ENCODE measurements at regions of chr9 and their contacts with region 1.

Region 1: GRCh38 chr9:124505006-124505900 is 1.9 kb downstream of the NR5A1 start:
- DNase-seq: peak in 1 of 2 experiments; percentile 75
- H3K4me3 ChIP-seq: peak overlapping the region in 3 of 4 experiments; percentile 19 to 58 (median 26); a peak in 6 of 8 replicates
- H3K27ac ChIP-seq: no peak overlapping the region
- H3K4me1 ChIP-seq: peaks cover 0 to 17% (median 12%) of the 10 kb centered on the region in 4 experiments; a peak in 6 of 7 replicates
- H3K27me3 ChIP-seq: peaks cover 39 to 61% (median 55%) of the 10 kb centered on the region in 4 experiments
- CTCF ChIP-seq: peak in 2 of 3 experiments; percentile 38 to 53; a peak in 2 of 4 replicates
- EP300 ChIP-seq: no peak
- POLR2A ChIP-seq: no peak
- RAD21 ChIP-seq: peak; percentile 3 to 32; a peak in 1 of 4 replicates

Region 2: DNA sequence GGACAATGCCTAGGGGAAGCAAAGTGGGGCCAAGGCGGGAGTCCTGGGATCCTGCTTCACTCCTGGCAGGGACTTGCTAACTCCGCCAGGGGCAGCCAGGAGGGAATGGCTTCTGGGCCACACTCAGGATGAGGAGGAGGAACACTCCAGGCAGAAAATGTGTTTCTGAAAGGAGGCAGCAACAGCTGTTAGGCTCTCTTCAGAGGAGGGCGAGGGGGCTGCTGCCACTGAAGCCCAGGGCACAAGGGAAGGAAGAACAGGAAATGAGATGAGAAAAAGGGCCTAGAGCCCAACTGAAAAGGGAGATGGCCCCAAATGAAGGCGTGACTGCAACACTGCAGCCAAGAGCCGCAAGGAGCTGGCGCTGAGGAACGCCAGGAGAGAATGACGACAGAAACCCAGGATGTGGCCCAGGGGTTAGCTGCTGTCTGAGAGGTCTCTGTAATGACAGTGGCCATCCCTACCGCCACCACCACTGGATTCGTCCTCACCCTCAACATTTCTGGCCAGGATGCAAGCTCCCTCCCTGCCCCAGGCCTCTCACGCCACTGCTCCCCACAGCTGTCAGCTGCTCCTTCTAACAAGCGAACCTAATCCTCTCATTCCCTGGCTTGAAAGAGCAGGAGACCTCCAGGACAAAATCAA is 105.8 kb before region 1 on chr9:
- CTCF ChIA-PET with region 1: no interaction called
- POLR2A ChIA-PET with region 1: no interaction called
- DNase-seq: peak in 1 of 2 experiments; percentile 56
- H3K4me3 ChIP-seq: no peak overlapping the region
- H3K27ac ChIP-seq: peak overlapping the region; percentile 57
- H3K4me1 ChIP-seq: peaks cover 3 to 14% (median 12%) of the 10 kb centered on the region in 4 experiments
- H3K27me3 ChIP-seq: no peaks in the 10 kb centered on the region
- CTCF ChIP-seq: peak in 2 of 3 experiments; percentile 12 to 21; a peak in 2 of 4 replicates
- EP300 ChIP-seq: no peak
- POLR2A ChIP-seq: no peak
- RAD21 ChIP-seq: no peak

Region 3: DNA sequence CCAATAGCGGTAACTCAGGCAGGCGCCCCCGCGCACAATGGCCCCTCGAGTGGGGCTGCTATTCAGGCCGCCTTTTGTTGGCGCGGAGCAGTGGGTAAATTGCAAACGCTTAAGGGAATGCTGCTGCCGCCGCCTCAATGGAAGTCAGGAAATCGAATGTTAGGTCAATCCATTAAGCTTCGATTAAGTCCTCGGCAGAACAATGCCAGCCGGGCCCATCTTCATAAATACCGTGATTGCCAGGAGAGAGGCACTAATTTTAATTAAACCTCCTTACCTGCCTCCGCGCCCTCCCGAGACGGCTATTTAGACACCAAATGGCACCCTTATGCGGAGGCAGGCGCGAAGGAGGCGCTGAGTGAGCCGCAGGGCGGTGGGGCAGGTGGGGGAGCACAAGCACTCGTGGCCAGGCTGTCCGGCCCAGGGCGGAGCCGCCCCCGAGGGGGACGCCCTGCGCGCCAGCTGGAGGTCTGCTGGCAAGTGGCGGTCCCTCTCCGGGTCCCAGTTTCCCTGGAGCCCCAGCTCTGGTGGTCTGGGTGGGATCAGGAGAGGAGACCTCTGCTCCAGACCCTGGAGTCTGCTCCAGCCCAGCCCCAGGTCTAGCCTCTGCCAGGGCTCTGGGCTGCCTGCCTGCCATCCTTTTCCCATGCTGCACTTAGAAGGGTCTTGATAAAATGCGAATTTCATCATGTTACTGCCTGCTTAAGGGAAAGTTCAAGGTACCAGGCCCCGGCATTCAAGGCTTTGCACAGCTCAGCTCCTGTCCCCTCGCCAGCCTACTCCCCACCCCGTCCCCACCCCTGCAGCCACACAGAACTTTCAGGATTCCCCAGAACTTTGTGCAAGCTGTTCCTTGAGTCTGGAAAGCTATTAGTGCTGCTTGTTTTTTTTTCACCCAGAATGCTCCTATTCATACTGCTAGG is 17.7 kb before region 1 on chr9:
- CTCF ChIA-PET with region 1: interaction called, 11 read pairs
- POLR2A ChIA-PET with region 1: interaction called, 6 read pairs
- DNase-seq: no peak
- H3K4me3 ChIP-seq: 0 out of 8 replicates have a peak overlapping the region, but pooled peaks of 1 of the 4 experiments have one; percentile 22
- H3K27ac ChIP-seq: no peak overlapping the region
- H3K4me1 ChIP-seq: peaks cover 3 to 26% (median 5%) of the 10 kb centered on the region in 4 experiments; a peak in 6 of 7 replicates
- H3K27me3 ChIP-seq: peaks cover 0 to 9% (median 6%) of the 10 kb centered on the region in 4 experiments; a peak in 5 of 7 replicates
- CTCF ChIP-seq: no peak
- EP300 ChIP-seq: no peak
- POLR2A ChIP-seq: no peak
- RAD21 ChIP-seq: no peak

Region 4: DNA sequence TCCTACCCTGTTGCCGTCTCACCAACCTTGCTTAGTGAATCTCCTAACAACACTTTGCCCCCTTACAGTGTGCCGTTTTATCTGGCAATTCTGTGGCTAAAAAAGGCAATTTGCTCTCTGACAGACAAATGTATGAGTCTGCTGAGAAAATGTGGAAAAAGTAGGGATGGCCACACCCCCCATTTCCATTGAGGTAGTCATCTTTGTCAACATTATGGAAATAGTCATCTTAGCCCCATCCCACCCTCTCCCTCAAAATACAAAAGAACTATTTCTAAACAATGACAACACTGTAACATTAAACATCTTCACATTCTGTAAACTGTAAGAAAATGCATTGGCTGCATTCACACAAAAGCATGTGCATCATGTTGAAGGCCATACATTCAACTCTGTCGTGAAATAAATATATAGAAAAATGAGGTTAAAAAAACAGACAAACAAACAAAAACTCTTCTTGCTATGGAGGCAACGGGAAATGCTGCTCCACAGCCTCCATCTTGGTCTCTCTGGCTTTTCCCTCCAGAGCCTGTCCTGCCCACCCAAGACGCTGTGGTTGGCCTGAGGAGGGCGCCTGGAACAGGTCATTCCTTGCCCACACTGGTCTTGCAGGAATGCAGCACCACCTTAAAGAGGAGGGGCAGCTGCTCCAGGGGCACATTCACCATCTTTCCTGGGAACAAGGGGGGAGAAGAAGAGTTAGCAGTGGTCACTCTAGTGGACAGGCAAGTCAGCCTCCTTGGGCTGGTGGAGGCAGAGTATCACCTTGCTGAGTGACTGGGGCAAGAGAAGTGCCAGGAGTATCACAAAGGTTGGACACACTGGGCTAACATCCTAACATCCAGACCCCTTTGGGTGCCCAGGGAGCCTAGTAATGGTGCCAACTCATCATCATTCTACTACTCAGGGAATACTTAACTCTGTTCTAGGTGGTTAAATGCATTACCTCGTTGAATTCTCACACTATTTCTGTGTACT is 17.2 kb after region 1 on chr9:
- CTCF ChIA-PET with region 1: interaction called, 12 read pairs
- POLR2A ChIA-PET with region 1: interaction called, 4 read pairs
- DNase-seq: peak in 1 of 2 experiments; percentile 69
- H3K4me3 ChIP-seq: no peak overlapping the region
- H3K27ac ChIP-seq: no peak overlapping the region
- H3K4me1 ChIP-seq: no peaks in the 10 kb centered on the region
- H3K27me3 ChIP-seq: no peaks in the 10 kb centered on the region
- CTCF ChIP-seq: peak; percentile 23 to 61 (median 45); a peak in 3 of 4 replicates
- EP300 ChIP-seq: no peak
- POLR2A ChIP-seq: no peak
- RAD21 ChIP-seq: peak; percentile 27 to 52

Region 5: DNA sequence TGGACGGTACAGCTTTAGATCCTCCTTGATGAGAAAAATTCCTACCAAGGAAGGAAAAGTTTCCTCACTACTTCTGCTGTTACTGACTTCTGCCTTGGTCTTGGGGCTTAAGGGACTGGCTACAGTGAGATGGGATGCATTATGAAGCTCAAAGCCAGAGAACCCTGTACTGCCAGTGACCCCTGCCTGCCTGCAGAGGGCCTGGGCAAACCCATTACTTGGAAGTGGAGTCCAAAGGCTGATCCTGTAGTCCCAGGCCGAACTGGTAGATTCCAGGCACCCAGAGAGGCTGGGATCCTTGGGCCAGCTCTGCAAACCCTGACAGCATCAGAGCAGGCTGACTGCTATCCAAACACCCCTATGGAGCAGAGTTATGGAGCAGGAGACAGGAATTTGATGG is 27.6 kb after region 1 on chr9:
- CTCF ChIA-PET with region 1: interaction called, 234 read pairs
- POLR2A ChIA-PET with region 1: no interaction called
- DNase-seq: no peak
- H3K4me3 ChIP-seq: no peak overlapping the region
- H3K27ac ChIP-seq: no peak overlapping the region
- H3K4me1 ChIP-seq: no peaks in the 10 kb centered on the region
- H3K27me3 ChIP-seq: no peaks in the 10 kb centered on the region
- CTCF ChIP-seq: peak; percentile 11 to 31 (median 21); a peak in 3 of 4 replicates
- EP300 ChIP-seq: no peak
- POLR2A ChIP-seq: no peak
- RAD21 ChIP-seq: peak in 1 of 2 experiments; percentile 20; a peak in 1 of 4 replicates

Measured in H1 (cell line).